Right cardiac atrium (tissue), 5 donors: ENCODE measurements at regions of chr16 and their contacts with region 1.

Region 1: DNA sequence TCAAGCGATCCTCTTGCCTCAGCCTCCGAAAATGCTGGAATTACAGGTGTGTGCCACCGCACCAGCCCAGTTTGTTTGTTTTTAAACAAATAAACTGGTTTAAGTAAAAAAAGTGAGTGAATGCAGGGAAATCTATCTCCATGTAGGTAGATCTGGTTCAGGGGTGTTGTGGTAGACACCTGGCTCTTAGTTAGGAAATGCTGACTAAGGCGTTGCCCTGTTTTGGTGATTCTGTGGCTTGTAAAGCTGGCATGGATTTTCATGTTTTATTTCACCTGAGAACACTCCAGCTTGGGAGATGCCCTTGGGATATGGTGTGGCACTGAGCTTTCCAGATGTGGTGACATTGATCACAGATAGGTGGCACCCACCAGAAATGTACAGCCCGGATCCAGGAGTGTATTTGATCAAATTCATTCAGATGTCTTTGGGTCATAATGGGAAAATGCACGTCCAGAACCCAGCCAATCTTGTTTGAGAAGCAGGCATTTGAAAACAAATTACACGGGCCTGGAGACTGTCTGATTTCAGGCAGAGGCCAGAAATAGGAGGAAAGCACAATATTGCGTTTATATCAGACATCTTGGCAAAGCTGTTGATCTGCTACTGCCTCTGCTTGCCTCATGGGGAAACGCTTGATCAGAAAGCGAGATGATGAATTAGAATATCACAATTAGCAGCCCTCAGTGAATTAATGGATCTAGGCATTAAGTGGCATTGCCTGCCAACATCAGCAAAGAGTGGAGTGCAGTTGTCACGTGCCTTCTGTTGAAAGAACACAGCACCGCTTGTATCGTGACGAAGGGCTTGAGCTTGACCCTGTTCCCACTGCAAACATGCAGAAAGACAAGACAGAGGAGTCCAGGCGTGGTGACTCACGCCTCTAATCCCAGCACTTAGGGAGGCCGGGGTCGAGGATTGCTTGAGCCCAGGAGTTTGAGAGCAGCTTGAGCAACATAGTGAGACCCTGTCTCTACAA is 7.3 kb upstream of the IL34 start:
- DNase-seq: peak; percentile 18 to 47 (median 35)
- ATAC-seq: peak; percentile 41 to 75
- H3K4me3 ChIP-seq: no peak overlapping the region
- H3K27ac ChIP-seq: peak overlapping the region; percentile 29
- H3K4me1 ChIP-seq: peaks cover 2% of the 10 kb centered on the region
- H3K27me3 ChIP-seq: no peaks in the 10 kb centered on the region

Region 2: DNA sequence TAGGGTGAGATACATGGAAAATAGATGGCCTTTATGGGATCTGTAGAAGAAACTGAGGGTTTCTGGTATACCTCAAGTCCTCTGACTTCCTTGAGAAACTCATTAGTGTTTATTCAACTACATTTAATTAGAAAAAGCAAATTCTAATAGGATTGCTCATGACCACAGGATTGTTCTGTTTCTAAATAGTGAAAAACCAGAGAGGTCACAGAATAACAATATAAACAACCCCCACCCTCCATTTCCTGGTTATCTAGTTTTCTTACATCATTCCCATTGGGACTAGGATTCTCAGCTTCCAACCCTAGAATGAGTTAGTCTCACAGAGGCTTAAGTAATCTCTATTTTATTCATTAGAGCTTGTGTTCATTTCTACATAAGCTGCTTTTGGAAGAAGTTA is 85.5 kb before region 1 on chr16:
- intact Hi-C with region 1: loop called in 1 of 4 experiments (anchors 10 kb)
- DNase-seq: no peak
- ATAC-seq: peak in 1 of 2 donors; percentile 57
- H3K4me3 ChIP-seq: no peak overlapping the region
- H3K27ac ChIP-seq: no peak overlapping the region
- H3K4me1 ChIP-seq: no peaks in the 10 kb centered on the region
- H3K27me3 ChIP-seq: no peaks in the 10 kb centered on the region

Region 3: GRCh38 chr16:70582290-70582978 is 56.7 kb before region 1 on chr16:
- intact Hi-C with region 1: loop called in 1 of 4 experiments (anchors 10 kb)
- DNase-seq: peak in 1 of 3 donors; percentile 37
- ATAC-seq: no peak
- H3K4me3 ChIP-seq: no peak overlapping the region
- H3K27ac ChIP-seq: no peak overlapping the region
- H3K4me1 ChIP-seq: no peaks in the 10 kb centered on the region
- H3K27me3 ChIP-seq: no peaks in the 10 kb centered on the region

Region 4: GRCh38 chr16:70789226-70789926 is 150.3 kb after region 1 on chr16:
- intact Hi-C with region 1: no loop called
- DNase-seq: peak in 2 of 3 donors; percentile 80 to 83
- ATAC-seq: peak; percentile 22 to 27
- H3K4me3 ChIP-seq: no peak overlapping the region
- H3K27ac ChIP-seq: no peak overlapping the region
- H3K4me1 ChIP-seq: no peaks in the 10 kb centered on the region
- H3K27me3 ChIP-seq: no peaks in the 10 kb centered on the region